ENCODE measurements at regions of chr6 and their contacts with region 1.

Region 1: DNA sequence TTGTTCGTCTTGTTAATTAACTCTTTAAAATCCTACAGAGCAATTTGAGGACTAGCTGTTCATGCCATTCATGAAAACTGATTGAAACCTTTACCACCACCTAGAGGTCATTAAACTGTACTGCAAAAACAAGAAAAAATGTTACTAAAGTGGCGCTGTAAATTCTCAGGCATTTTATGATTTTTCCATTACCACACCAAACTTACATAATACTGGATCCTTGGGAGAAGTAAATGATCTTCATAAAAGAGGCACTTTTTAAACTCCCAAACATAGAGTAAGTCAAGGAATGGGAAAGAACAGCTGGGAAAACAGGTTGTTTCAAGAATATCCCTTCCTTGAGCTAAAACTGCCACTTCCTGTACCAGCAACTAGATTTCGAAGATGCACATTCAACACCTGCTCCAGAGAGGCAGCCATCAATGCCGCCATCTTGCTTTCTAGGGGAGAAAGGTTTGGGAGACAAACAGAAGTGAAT is 54.3 kb downstream of the MYLIP start:
- DNase-seq: peak; percentile 59
- ATAC-seq: peak; percentile 66
- H3K4me3 ChIP-seq: no peak overlapping the region
- H3K4me3 Mint-ChIP-seq: no peak overlapping the region
- H3K27ac ChIP-seq: no peak overlapping the region
- H3K27ac Mint-ChIP-seq: no peak overlapping the region
- H3K4me1 ChIP-seq: peaks cover 4 to 11% of the 10 kb centered on the region in 2 donors
- H3K4me1 Mint-ChIP-seq: peaks cover 20% of the 10 kb centered on the region
- H3K27me3 ChIP-seq: peaks cover 0 to 4% (median 0%) of the 10 kb centered on the region in 4 experiments
- H3K27me3 Mint-ChIP-seq: no peaks in the 10 kb centered on the region
- CTCF ChIP-seq: peak; percentile 86

Region 2: GRCh38 chr6:15770347-15771143 is 412.7 kb before region 1 on chr6:
- CTCF ChIA-PET with region 1: interaction called, 17 read pairs
- POLR2A ChIA-PET with region 1: no interaction called
- intact Hi-C with region 1: loop called (anchors 5 kb)
- DNase-seq: peak; percentile 25
- ATAC-seq: no peak
- H3K4me3 ChIP-seq: no peak overlapping the region
- H3K4me3 Mint-ChIP-seq: no peak overlapping the region
- H3K27ac ChIP-seq: no peak overlapping the region
- H3K27ac Mint-ChIP-seq: no peak overlapping the region
- H3K4me1 ChIP-seq: no peaks in the 10 kb centered on the region
- H3K4me1 Mint-ChIP-seq: no peaks in the 10 kb centered on the region
- H3K27me3 ChIP-seq: peaks cover 0 to 4% (median 0%) of the 10 kb centered on the region in 4 experiments
- H3K27me3 Mint-ChIP-seq: peaks cover 10% of the 10 kb centered on the region
- CTCF ChIP-seq: no peak

Region 3: DNA sequence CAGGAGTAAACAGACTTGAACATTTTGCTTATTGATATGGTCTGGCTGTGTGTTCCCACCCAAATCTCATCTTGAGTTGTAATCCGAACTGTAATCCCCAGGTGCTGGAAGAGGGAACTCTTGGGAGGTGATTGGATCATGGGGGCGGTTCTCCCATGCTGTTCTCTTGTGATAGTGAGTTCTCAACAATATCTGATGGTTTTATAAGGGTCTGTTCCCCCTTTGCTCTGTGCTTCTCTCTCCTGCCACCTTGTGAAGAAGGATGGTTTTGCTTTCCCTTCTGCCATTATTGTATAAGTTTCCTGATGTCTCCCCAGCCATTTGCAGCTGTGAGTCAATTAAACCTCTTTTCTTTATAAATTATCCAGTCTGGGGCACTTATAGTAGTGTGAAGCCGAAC is 14.4 kb before region 1 on chr6:
- CTCF ChIA-PET with region 1: interaction called, 10 read pairs
- POLR2A ChIA-PET with region 1: no interaction called
- intact Hi-C with region 1: no loop called
- DNase-seq: peak; percentile 49
- ATAC-seq: no peak
- H3K4me3 ChIP-seq: no peak overlapping the region
- H3K4me3 Mint-ChIP-seq: no peak overlapping the region
- H3K27ac ChIP-seq: no peak overlapping the region
- H3K27ac Mint-ChIP-seq: no peak overlapping the region
- H3K4me1 ChIP-seq: no peaks in the 10 kb centered on the region
- H3K4me1 Mint-ChIP-seq: peaks cover 3% of the 10 kb centered on the region
- H3K27me3 ChIP-seq: peaks cover 0 to 3% (median 0%) of the 10 kb centered on the region in 4 experiments
- H3K27me3 Mint-ChIP-seq: peaks cover 15% of the 10 kb centered on the region
- CTCF ChIP-seq: peak; percentile 59

Measured in B cell (primary cell).